Mammary epithelial cell (primary cell): ENCODE measurements at regions of chr6 and their contacts with region 1.

Region 1: GRCh38 chr6:134097114-134097707 is 44.8 kb upstream of the SLC2A12 start:
- DNase-seq: peak; percentile 45
- H3K4me3 ChIP-seq: no peak overlapping the region
- H3K27ac ChIP-seq: no peak overlapping the region
- H3K4me1 ChIP-seq: no peaks in the 10 kb centered on the region
- H3K27me3 ChIP-seq: no peaks in the 10 kb centered on the region
- CTCF ChIP-seq: peak; percentile 41 to 60

Region 2: DNA sequence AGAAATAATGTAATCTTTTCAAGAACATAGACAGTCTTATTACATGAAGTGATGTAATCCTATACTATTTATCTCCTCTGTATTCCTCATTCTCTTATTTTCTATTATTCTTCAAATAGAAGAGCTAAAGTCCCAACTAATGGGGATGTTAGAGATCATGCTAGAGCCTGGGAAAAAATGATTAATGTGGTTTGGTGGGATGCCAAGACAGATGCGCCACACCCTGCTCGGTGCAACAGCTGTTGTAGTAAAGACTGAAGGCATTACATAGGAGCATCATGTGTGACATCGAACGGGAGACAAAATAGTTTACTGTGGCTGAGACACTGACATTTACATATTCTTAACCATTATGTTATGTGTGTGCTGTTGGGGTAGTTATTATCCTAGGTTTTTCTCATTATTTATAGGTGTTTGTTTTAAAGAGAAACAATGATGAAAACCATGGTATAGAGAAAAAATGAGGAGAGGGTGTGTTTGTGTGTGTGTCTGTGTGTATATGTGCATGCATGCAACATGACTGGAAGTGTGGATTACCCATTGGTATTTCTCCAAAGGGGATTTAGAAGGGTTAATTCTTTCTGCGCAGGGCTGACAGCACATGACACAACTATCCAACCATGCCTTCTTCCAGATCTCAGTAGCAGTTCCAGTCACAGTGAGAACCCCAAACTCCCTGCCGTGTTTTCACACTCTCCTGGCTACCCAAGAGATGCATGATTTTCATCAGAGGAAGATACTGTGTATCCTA is 700.8 kb before region 1 on chr6:
- CTCF ChIA-PET with region 1: no interaction called
- dilution Hi-C with region 1: no loop called
- in situ Hi-C with region 1: no loop called
- intact Hi-C with region 1: no loop called
- DNase-seq: peak; percentile 5
- H3K4me3 ChIP-seq: no peak overlapping the region
- H3K27ac ChIP-seq: no peak overlapping the region
- H3K4me1 ChIP-seq: no peaks in the 10 kb centered on the region
- H3K27me3 ChIP-seq: peaks cover 3% of the 10 kb centered on the region
- CTCF ChIP-seq: no peak

Region 3: DNA sequence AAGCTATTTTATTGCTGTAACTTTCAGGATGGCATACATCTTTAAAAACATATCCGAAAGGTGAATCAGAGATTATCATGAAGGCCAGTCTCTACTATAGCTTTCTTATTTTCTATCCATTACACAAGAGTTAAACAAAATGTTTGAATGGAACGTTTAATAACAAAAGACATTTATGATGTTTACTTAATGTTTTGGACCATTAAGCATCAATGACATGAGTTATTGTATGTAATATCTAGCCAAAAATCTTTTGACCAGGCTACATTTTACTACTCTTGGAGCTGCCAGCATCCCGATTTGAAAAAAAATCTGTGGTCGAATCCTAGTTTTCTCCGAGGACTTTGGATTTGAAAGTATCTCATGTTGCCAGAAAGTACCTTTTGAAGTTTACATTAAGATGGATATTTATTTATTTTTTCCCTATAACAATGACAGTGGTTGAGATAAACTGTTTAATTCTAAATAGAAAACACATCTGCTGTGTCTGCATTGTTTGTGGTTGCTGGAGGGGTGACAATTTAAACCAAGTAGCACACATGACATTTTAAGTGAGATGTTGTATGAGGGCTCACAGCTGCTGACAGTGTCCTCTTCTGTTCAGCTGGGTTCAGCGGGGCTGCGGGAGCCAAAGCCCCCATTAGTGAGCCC is 502.0 kb before region 1 on chr6:
- CTCF ChIA-PET with region 1: no interaction called
- dilution Hi-C with region 1: no loop called
- in situ Hi-C with region 1: loop called in 1 of 2 experiments (anchors 25 kb)
- intact Hi-C with region 1: no loop called
- DNase-seq: no peak
- H3K4me3 ChIP-seq: no peak overlapping the region
- H3K27ac ChIP-seq: no peak overlapping the region
- H3K4me1 ChIP-seq: peaks cover 18% of the 10 kb centered on the region
- H3K27me3 ChIP-seq: no peaks in the 10 kb centered on the region
- CTCF ChIP-seq: no peak

Region 4: GRCh38 chr6:133837801-133838349 is 259.3 kb before region 1 on chr6:
- CTCF ChIA-PET with region 1: no interaction called
- dilution Hi-C with region 1: no loop called
- in situ Hi-C with region 1: loop called in 1 of 2 experiments (anchors 10 kb)
- intact Hi-C with region 1: loop called (anchors 5 kb)
- DNase-seq: peak; percentile 69
- H3K4me3 ChIP-seq: peak overlapping the region; percentile 46 to 76 (median 62)
- H3K27ac ChIP-seq: peak overlapping the region; percentile 38
- H3K4me1 ChIP-seq: peaks cover 3% of the 10 kb centered on the region
- H3K27me3 ChIP-seq: no peaks in the 10 kb centered on the region
- CTCF ChIP-seq: peak; percentile 82 to 93

Region 5: GRCh38 chr6:133923938-133924593 is 173.1 kb before region 1 on chr6:
- CTCF ChIA-PET with region 1: interaction called, 45 read pairs
- dilution Hi-C with region 1: loop called (anchors 5 kb)
- in situ Hi-C with region 1: loop called (anchors 5 kb)
- intact Hi-C with region 1: loop called (anchors 1 kb)
- DNase-seq: peak; percentile 59
- H3K4me3 ChIP-seq: no peak overlapping the region
- H3K27ac ChIP-seq: no peak overlapping the region
- H3K4me1 ChIP-seq: no peaks in the 10 kb centered on the region
- H3K27me3 ChIP-seq: no peaks in the 10 kb centered on the region
- CTCF ChIP-seq: peak; percentile 78 to 87

Region 6: GRCh38 chr6:133973109-133973971 is 123.9 kb before region 1 on chr6:
- CTCF ChIA-PET with region 1: interaction called, 5 read pairs
- dilution Hi-C with region 1: no loop called
- in situ Hi-C with region 1: no loop called
- intact Hi-C with region 1: loop called (anchors 1 kb)
- DNase-seq: peak; percentile 31
- H3K4me3 ChIP-seq: no peak overlapping the region
- H3K27ac ChIP-seq: no peak overlapping the region
- H3K4me1 ChIP-seq: peaks cover 7% of the 10 kb centered on the region
- H3K27me3 ChIP-seq: no peaks in the 10 kb centered on the region
- CTCF ChIP-seq: peak; percentile 69 to 70

Region 7: GRCh38 chr6:134063966-134064445 is 33.2 kb before region 1 on chr6:
- CTCF ChIA-PET with region 1: interaction called, 3 read pairs
- dilution Hi-C with region 1: no loop called
- in situ Hi-C with region 1: no loop called
- intact Hi-C with region 1: loop called (anchors 1 kb)
- DNase-seq: peak; percentile 55
- H3K4me3 ChIP-seq: no peak overlapping the region
- H3K27ac ChIP-seq: no peak overlapping the region
- H3K4me1 ChIP-seq: peaks cover 20% of the 10 kb centered on the region
- H3K27me3 ChIP-seq: no peaks in the 10 kb centered on the region
- CTCF ChIP-seq: peak; percentile 93 to 98